ENCODE measurements at regions of chr13 and their contacts with region 1.

Region 1: GRCh38 chr13:95660981-95661581 is 15.9 kb upstream of the DNAJC3 start:
- DNase-seq: peak; percentile 36
- H3K4me3 Mint-ChIP-seq: no peak overlapping the region
- H3K27ac Mint-ChIP-seq: no peak overlapping the region
- H3K4me1 Mint-ChIP-seq: no peaks in the 10 kb centered on the region
- H3K27me3 Mint-ChIP-seq: peaks cover 12% of the 10 kb centered on the region

Region 2: GRCh38 chr13:95494082-95494681 is 166.9 kb before region 1 on chr13:
- CTCF ChIA-PET with region 1: interaction called, 5 read pairs
- intact Hi-C with region 1: loop called (anchors 1 kb)
- DNase-seq: no peak
- H3K4me3 Mint-ChIP-seq: no peak overlapping the region
- H3K27ac Mint-ChIP-seq: no peak overlapping the region
- H3K4me1 Mint-ChIP-seq: no peaks in the 10 kb centered on the region
- H3K27me3 Mint-ChIP-seq: peaks cover 12% of the 10 kb centered on the region

Region 3: GRCh38 chr13:95536632-95537241 is 124.3 kb before region 1 on chr13:
- CTCF ChIA-PET with region 1: interaction called, 8 read pairs
- intact Hi-C with region 1: loop called (anchors 2 kb)
- DNase-seq: no peak
- H3K4me3 Mint-ChIP-seq: no peak overlapping the region
- H3K27ac Mint-ChIP-seq: no peak overlapping the region
- H3K4me1 Mint-ChIP-seq: peaks cover 5% of the 10 kb centered on the region
- H3K27me3 Mint-ChIP-seq: peaks cover 26% of the 10 kb centered on the region

Region 4: GRCh38 chr13:95573226-95573625 is 87.9 kb before region 1 on chr13:
- CTCF ChIA-PET with region 1: no interaction called
- intact Hi-C with region 1: no loop called
- DNase-seq: no peak
- H3K4me3 Mint-ChIP-seq: no peak overlapping the region
- H3K27ac Mint-ChIP-seq: no peak overlapping the region
- H3K4me1 Mint-ChIP-seq: no peaks in the 10 kb centered on the region
- H3K27me3 Mint-ChIP-seq: peaks cover 21% of the 10 kb centered on the region

Measured in activated naive CD4-positive, alpha-beta T cell treated with anti-CD3 and anti-CD28 coated beads for 36 hours (primary cell).